Activated CD4-positive, alpha-beta T cell treated with anti-CD3 and anti-CD28 coated beads for 36 hours (primary cell): ENCODE measurements at regions of chr9 and their contacts with region 1.

Region 1: GRCh38 chr9:98791147-98792095 is 4.9 kb downstream of the ANKS6 start:
- DNase-seq: peak; percentile 78
- ATAC-seq: peak; percentile 83
- H3K4me3 Mint-ChIP-seq: no peak overlapping the region
- H3K27ac Mint-ChIP-seq: no peak overlapping the region
- H3K4me1 Mint-ChIP-seq: peaks cover 26% of the 10 kb centered on the region
- H3K27me3 Mint-ChIP-seq: no peaks in the 10 kb centered on the region

Region 2: GRCh38 chr9:98146101-98146991 is 645.1 kb before region 1 on chr9:
- CTCF ChIA-PET with region 1: no interaction called
- POLR2A ChIA-PET with region 1: no interaction called
- intact Hi-C with region 1: no loop called
- DNase-seq: no peak
- ATAC-seq: no peak
- H3K4me3 Mint-ChIP-seq: no peak overlapping the region
- H3K27ac Mint-ChIP-seq: no peak overlapping the region
- H3K4me1 Mint-ChIP-seq: no peaks in the 10 kb centered on the region
- H3K27me3 Mint-ChIP-seq: no peaks in the 10 kb centered on the region

Region 3: GRCh38 chr9:98315551-98316060 is 475.8 kb before region 1 on chr9:
- CTCF ChIA-PET with region 1: interaction called, 4 read pairs
- POLR2A ChIA-PET with region 1: no interaction called
- intact Hi-C with region 1: loop called (anchors 1 kb)
- DNase-seq: peak; percentile 90
- ATAC-seq: peak; percentile 96
- H3K4me3 Mint-ChIP-seq: no peak overlapping the region
- H3K27ac Mint-ChIP-seq: no peak overlapping the region
- H3K4me1 Mint-ChIP-seq: no peaks in the 10 kb centered on the region
- H3K27me3 Mint-ChIP-seq: no peaks in the 10 kb centered on the region

Region 4: DNA sequence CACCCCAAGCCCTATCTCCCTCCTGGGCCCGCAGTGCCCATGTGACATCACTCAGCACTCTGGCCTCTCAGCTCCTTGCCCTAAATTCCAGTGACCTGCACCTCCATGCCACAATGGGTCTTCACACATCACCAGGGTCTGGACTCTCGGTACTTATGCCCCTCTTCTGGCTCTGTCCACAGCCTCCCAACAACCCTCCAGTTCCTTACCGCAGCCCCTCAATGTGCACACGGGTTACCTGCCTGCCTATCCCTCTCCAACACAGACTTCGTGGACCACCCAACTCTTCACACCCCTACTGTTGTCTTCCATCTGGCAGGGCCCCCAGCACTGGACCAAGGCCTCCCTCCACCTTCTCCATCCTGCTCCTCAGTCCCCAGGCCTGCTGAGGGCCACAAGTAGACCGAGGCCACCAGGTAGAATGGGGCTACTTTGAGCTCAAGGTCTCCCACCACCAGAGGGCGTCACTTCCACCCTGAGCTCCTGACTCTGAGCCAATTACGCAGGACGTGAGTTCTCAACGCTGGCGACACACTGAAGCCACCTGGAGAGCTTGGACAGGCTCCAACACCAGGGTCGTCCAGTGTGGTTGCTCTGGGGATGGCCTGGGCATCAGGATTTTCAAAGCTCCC is 254.8 kb before region 1 on chr9:
- CTCF ChIA-PET with region 1: no interaction called
- POLR2A ChIA-PET with region 1: no interaction called
- intact Hi-C with region 1: loop called in 1 of 2 experiments (anchors 2 kb)
- DNase-seq: peak; percentile 63
- ATAC-seq: no peak
- H3K4me3 Mint-ChIP-seq: no peak overlapping the region
- H3K27ac Mint-ChIP-seq: no peak overlapping the region
- H3K4me1 Mint-ChIP-seq: no peaks in the 10 kb centered on the region
- H3K27me3 Mint-ChIP-seq: peaks cover 4% of the 10 kb centered on the region

Region 5: GRCh38 chr9:98775831-98776441 is 15.5 kb before region 1 on chr9:
- CTCF ChIA-PET with region 1: interaction called, 34 read pairs
- POLR2A ChIA-PET with region 1: no interaction called
- intact Hi-C with region 1: no loop called
- DNase-seq: peak; percentile 47
- ATAC-seq: no peak
- H3K4me3 Mint-ChIP-seq: no peak overlapping the region
- H3K27ac Mint-ChIP-seq: no peak overlapping the region
- H3K4me1 Mint-ChIP-seq: no peaks in the 10 kb centered on the region
- H3K27me3 Mint-ChIP-seq: no peaks in the 10 kb centered on the region